ENCODE measurements at regions of chr6 and their contacts with region 1.

Region 1: GRCh38 chr6:69796642-69797390 is at the start of gene LMBRD1:
- DNase-seq: peak; percentile 98
- ATAC-seq: peak; percentile 94
- H3K4me3 Mint-ChIP-seq: peak within 1 kb of the TSS; percentile 89
- H3K27ac Mint-ChIP-seq: peak within 1 kb of the TSS; percentile 94
- H3K4me1 Mint-ChIP-seq: peaks cover 31% of the 10 kb centered on the region
- H3K27me3 Mint-ChIP-seq: no peaks in the 10 kb centered on the region
- total RNA-seq, gene LMBRD1: 18.3 to 19.1 TPM

Region 2: DNA sequence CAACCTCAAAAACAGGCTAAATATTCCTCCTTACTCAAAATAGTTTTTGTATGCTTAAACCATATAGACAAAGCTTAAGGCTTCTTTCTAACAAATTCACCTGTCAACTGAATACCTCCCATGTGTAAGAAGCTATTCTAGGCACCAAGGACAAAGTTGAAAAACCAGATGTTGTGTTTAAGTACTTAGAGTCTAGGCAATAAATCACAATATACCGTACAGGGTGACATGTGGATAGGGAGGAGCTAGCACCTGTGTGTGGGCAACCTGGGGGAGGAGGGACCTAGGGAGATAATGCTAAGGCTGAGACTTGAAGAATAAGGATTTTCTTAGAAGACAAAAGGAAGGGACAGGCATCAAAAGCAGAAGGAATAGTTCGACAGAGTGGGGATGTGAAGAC is 123.5 kb before region 1 on chr6:
- CTCF ChIA-PET with region 1: no interaction called
- DNase-seq: no peak
- ATAC-seq: no peak
- H3K4me3 Mint-ChIP-seq: no peak overlapping the region
- H3K27ac Mint-ChIP-seq: no peak overlapping the region
- H3K4me1 Mint-ChIP-seq: no peaks in the 10 kb centered on the region
- H3K27me3 Mint-ChIP-seq: no peaks in the 10 kb centered on the region

Region 3: DNA sequence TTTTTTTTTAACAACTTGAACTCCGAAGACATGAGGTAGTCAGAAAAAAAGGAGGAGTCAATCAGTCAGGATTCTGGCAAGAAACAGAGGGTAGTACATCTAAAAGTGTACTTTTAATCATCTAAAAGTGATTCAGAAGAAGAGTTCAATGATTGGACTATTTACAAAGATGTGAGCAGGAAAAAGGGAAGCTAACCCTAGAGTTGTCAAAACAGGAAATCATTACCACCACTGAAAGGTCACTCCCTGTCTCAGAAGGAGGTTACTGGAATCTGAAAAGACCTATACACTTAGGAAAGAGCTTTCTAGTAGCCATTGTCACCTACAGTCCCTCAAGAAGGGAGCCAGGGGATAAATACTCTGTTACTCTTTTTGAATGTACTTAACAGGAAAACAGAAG is 16.7 kb after region 1 on chr6:
- CTCF ChIA-PET with region 1: interaction called, 71 read pairs
- DNase-seq: no peak
- ATAC-seq: no peak
- H3K4me3 Mint-ChIP-seq: no peak overlapping the region
- H3K27ac Mint-ChIP-seq: peak overlapping the region; percentile 69
- H3K4me1 Mint-ChIP-seq: peaks cover 46% of the 10 kb centered on the region
- H3K27me3 Mint-ChIP-seq: peaks cover 3% of the 10 kb centered on the region

Region 4: GRCh38 chr6:69820438-69820837 is 23.6 kb after region 1 on chr6:
- CTCF ChIA-PET with region 1: interaction called, 71 read pairs
- DNase-seq: no peak
- ATAC-seq: no peak
- H3K4me3 Mint-ChIP-seq: no peak overlapping the region
- H3K27ac Mint-ChIP-seq: peak overlapping the region; percentile 35
- H3K4me1 Mint-ChIP-seq: peaks cover 27% of the 10 kb centered on the region
- H3K27me3 Mint-ChIP-seq: no peaks in the 10 kb centered on the region

Measured in activated CD8-positive, alpha-beta memory T cell treated with anti-CD3 and anti-CD28 coated beads, Interleukin-2, amount 10 ng/mL, durations not matched to agents 7 days and 5 days (primary cell).